ENCODE measurements at regions of chr4 and their contacts with region 1.

Region 1: GRCh38 chr4:56799824-56800756 is 21.4 kb downstream of the SPINK2 start:
- DNase-seq: peak; percentile 94
- H3K4me3 ChIP-seq: peak overlapping the region; percentile 62 to 66
- H3K27ac ChIP-seq: peak overlapping the region; percentile 80 to 89
- H3K4me1 ChIP-seq: peaks cover 15% of the 10 kb centered on the region
- H3K27me3 ChIP-seq: no peaks in the 10 kb centered on the region
- CTCF ChIP-seq: peak; percentile 76 to 86 (median 77)
- POLR2A ChIP-seq: no peak

Region 2: DNA sequence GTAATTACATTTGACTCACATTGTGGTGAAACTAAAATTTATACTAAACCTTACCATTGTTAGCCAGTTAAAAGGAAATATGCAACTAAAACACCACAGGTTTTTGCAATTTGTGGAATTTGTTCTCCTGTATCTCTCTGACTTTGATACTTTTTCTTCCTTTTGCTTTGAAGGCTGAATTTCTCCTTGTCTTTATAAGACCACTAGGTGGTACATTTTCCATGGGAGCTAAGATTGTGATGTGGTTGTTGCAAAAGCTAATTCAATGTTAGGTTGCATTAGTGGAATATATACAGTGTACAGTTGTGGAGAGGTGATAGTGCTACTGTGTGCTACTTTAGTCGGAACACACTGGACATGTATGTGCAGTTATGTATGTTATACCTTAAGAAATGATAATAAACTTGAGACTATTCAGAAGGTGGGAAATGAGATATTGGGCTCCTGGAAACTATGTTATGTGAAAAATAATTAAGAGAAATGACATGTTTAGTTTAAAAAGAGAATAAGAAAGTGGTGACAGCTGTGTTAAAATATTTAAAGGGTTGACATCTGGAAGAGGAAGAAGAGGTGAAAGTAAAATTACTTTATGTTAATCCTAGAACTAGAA is 224.2 kb before region 1 on chr4:
- intact Hi-C with region 1: loop called (anchors 10 kb)
- DNase-seq: no peak
- H3K4me3 ChIP-seq: no peak overlapping the region
- H3K27ac ChIP-seq: no peak overlapping the region
- H3K4me1 ChIP-seq: no peaks in the 10 kb centered on the region
- H3K27me3 ChIP-seq: no peaks in the 10 kb centered on the region
- CTCF ChIP-seq: peak; percentile 38 to 54 (median 45)
- POLR2A ChIP-seq: no peak

Region 3: DNA sequence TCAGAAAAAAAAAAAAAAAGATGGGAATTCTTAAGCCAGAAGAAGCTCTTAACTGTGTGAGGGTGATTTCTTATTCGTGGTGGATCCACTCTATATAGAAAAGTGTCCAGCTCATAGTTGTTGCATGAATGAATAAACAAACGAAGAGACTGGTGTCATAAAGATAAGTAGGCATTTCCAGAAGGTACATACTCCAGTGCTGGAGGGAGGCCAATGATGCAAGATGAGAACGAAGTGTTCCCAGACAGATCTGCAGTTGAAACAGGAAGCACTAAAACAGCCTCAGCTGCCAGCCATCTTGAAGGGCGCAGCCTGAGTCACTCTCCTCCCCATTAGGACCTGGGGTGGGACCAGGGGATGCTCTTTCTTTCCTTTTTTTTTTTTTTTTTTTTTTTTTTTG is 71.6 kb before region 1 on chr4:
- intact Hi-C with region 1: no loop called
- DNase-seq: peak; percentile 92
- H3K4me3 ChIP-seq: no peak overlapping the region
- H3K27ac ChIP-seq: peak overlapping the region; percentile 68
- H3K4me1 ChIP-seq: peaks cover 13% of the 10 kb centered on the region
- H3K27me3 ChIP-seq: no peaks in the 10 kb centered on the region
- CTCF ChIP-seq: no peak
- POLR2A ChIP-seq: no peak